ENCODE measurements at regions of chr17 and their contacts with region 1.

Region 1: DNA sequence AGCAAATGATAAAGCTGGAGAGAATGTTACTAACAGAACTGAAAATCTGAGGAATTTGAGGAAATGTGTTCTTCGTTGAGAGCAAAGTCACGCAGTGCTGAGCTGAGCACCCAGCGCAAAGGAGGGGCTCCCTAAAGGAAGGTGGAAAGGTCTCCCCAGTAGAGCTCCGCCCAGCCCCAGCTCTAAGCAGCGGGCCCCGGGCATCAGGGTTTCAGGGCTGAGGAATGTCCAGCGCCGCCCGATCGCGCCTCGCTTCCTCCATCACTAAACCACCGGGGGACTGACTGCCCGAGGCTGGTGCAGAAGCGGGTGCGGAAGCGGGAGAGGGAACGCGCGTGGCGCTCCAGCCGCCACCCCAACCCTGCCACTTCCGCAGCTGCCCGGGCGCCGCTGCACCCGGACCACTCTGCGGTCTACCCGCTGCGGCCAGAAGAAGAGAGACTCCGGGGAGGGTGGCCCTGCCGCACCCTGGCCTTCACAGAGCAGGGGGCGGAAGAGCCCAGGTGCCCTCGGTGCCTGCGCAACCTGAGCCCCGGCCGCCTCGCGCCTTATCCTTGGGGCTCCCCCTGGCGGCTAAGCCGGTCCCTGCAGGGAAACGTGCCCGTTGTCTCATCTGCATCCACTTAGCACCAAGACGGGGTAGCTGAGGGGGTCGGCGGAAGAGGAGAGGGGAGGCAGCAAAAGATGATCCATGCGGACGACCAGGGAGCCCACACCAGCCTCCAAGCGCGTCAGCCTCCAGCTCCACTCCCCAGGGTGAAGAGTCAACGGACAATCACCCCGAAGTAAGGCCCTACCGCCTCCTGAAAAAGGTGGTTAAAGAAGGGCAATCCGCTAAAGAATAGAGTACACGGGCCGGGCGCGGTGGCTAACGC is 12.4 kb upstream of the GUCY2D start:
- H3K4me3 ChIP-seq: peak overlapping the region; percentile 59
- H3K27ac ChIP-seq: peak overlapping the region; percentile 29; the same call in 1 of the 2 replicates
- H3K4me1 ChIP-seq: no peaks in the 10 kb centered on the region
- CTCF ChIP-seq: peak; percentile 98

Region 2: DNA sequence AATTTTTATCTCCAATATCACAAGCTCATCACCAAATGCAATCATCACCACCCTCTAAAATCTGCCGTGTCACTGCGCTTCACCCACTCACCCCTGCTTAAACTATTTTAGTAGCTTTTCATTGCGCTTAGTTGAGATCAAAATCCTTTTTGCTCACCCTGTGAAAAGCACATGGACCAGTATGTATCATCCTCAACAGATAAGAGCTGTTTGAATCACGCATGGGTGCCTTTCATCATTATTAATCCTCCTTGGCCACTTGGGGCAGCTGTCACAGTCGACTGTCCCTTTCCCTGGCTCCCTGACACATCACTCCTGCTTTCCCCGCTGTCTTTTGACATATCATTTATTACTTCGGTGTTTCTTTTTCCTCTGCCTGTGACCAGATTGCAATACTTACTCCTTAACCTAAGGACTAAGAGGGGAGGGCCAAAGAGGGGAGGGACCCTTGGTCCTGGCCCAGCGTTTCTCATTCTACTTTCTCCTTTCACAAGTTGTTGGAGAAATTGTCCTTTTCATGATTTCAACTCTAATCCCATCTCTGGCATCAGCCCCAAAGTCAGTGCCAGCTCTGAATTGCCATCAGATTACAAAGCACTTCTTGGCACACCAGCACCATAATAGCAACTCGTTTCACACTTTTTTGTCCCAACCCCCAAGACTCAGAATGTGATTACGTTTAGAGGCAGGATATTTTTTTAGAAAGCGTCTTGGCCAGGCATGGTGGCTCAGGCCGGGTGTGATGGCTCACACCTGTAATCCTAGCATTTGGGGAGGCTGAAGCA is 164.6 kb before region 1 on chr17:
- CTCF ChIA-PET with region 1: interaction called, 20 read pairs
- POLR2A ChIA-PET with region 1: no interaction called
- H3K4me3 ChIP-seq: no peak overlapping the region
- H3K27ac ChIP-seq: no peak overlapping the region
- H3K4me1 ChIP-seq: no peaks in the 10 kb centered on the region
- CTCF ChIP-seq: peak; percentile 73; the same call in 1 of the 2 replicates

Region 3: GRCh38 chr17:7903154-7904103 is 86.6 kb before region 1 on chr17:
- CTCF ChIA-PET with region 1: interaction called, 24 read pairs
- POLR2A ChIA-PET with region 1: no interaction called
- H3K4me3 ChIP-seq: no peak overlapping the region
- H3K27ac ChIP-seq: peak overlapping the region; percentile 60
- H3K4me1 ChIP-seq: peaks cover 10% of the 10 kb centered on the region; the same call in 1 of the 2 replicates
- CTCF ChIP-seq: no peak

Region 4: GRCh38 chr17:7972131-7972785 is 17.8 kb before region 1 on chr17:
- CTCF ChIA-PET with region 1: interaction called, 14 read pairs
- POLR2A ChIA-PET with region 1: interaction called, 4 read pairs
- H3K4me3 ChIP-seq: no peak overlapping the region
- H3K27ac ChIP-seq: no peak overlapping the region
- H3K4me1 ChIP-seq: no peaks in the 10 kb centered on the region
- CTCF ChIP-seq: no peak

Region 5: DNA sequence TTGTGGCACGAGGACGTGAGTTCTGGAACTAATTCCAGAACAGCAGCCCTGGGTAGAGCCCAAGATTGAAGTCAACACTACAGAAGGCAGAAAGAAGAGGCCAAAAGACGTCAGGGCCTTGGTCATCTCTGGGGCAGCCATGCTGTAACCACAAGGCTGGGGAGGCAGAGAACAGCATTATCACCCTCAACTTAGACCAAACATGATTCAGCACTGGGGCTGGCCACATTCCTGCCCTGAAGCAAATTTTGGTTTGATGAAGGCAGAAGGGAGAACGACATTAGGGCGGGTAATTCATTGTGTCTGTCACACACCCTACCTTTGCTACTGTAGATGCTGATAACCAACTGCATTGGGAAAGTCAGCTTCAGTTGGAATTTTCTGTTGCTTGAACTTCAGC is 39.1 kb after region 1 on chr17:
- CTCF ChIA-PET with region 1: interaction called, 15 read pairs
- POLR2A ChIA-PET with region 1: no interaction called
- H3K4me3 ChIP-seq: no peak overlapping the region
- H3K27ac ChIP-seq: no peak overlapping the region
- H3K4me1 ChIP-seq: no peaks in the 10 kb centered on the region
- CTCF ChIP-seq: no peak